ENCODE measurements at regions of chr19 and their contacts with region 1.

Region 1: DNA sequence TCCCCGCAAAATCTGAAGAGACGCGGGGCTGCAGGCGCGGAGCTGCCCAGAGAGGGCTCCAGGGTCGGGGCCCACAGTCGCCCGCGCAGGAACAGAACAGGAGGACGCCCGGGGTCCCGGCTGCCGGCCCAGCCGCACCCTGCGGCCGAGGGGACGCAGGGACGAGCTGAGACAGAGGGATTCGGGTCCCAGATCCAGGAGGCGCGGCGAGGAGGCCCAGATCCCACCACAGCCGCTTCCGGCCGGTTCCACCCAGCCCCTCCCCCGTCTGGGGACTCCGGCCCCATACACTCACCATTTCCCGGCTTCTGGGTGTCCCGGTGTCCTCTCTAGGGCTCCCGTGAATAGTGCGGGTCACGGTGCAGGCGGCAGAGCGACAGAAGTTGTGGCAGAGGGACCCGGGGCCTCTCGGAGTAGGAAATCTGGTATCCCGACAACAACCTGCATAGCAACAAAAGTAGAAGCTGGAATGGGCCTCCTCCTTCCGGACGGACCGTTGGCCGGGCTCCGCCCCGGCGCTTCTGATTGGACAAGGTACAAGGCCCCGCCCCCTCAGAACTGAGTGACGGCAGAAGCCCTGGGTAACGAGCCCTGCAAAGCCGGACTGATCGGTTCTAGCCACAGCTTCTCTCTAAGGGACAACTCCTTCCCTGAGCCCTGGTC is at the start of gene ZNF20:
- DNase-seq: peak; percentile 98
- H3K27ac ChIP-seq: peak within 1 kb of the TSS; percentile 86
- CTCF ChIP-seq: no peak

Region 2: DNA sequence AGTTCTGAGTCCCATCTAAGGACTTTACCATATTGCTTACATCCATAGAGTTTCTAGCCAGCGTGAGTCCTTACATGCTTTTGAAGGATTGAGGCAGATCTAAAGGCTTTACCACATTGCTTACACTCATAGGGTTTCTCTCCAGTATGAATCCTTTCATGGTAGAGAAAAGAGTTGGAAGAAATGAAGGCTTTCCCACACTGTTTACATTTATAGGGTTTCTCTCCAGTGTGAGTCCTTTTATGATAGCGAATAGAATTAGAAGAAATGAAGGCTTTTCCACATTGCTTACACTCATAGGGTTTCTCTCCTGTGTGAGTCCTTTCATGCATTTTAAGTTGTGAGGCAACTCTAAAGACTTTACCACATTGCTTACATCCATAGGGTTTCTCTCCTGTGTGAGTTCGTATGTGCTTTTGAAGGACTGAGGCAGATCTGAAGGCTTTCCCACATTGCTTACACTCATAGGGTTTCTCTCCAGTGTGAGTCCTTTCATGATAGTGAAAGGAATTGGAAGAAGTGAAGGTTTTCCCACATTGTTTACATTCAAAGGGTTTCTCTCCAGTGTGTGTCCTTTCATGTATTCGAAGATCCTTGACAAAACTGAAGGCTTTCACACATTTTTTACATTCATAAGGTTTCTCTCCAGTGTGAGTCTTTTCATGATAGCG is 96.1 kb before region 1 on chr19:
- CTCF ChIA-PET with region 1: no interaction called
- POLR2A ChIA-PET with region 1: no interaction called
- DNase-seq: no peak
- H3K27ac ChIP-seq: no peak overlapping the region
- CTCF ChIP-seq: no peak

Region 3: DNA sequence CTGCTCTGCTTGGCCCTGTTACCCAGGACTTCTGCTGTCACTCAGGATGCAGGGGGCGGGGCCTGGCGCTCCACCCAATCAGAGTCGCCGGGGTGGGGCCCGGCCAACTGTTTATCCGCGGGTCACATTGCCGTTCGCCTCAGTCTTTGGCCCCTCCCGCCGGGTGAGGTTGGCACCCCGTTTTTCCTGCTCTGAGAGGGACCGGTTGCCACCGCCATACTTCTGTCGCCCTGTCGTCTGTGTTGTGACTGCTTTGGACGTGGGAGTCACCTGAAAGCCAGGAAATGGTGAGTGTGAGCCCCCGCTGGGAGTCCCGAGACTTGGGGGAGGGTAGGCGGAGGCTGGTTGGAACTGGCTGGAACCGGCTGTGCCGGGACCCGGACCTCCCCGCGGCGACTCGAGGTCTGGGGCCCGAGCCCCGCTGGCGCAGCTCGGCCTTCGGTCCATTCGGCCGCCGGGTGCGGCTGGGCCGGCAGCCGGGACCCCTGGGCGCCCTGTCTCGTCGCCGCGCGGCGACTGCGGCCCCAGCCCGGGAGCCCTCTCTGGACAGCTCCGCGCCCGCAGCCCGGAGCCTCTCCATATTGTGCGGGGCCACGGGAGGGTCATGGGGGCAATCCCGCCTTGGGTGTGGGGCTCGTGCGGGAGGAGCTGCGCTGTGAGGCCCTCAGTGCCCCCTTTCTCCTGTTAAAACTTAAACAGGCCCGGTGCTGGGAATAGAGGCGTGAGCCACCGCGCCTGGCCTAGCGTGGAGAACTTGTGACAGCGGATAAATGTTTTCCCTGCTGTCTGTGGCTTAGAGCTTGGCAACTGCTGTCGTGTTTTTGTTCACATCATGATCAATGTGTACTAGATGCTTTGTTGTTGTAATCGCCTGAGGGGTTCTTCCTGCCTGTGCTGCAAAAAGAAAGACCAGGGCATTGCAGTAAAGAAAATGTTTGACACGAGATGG is 75.2 kb before region 1 on chr19 and contains the start of gene ZNF844:
- CTCF ChIA-PET with region 1: interaction called, 22 read pairs
- POLR2A ChIA-PET with region 1: no interaction called
- DNase-seq: peak; percentile 94
- H3K27ac ChIP-seq: peak within 1 kb of the TSS; percentile 80
- CTCF ChIP-seq: no peak

Region 4: DNA sequence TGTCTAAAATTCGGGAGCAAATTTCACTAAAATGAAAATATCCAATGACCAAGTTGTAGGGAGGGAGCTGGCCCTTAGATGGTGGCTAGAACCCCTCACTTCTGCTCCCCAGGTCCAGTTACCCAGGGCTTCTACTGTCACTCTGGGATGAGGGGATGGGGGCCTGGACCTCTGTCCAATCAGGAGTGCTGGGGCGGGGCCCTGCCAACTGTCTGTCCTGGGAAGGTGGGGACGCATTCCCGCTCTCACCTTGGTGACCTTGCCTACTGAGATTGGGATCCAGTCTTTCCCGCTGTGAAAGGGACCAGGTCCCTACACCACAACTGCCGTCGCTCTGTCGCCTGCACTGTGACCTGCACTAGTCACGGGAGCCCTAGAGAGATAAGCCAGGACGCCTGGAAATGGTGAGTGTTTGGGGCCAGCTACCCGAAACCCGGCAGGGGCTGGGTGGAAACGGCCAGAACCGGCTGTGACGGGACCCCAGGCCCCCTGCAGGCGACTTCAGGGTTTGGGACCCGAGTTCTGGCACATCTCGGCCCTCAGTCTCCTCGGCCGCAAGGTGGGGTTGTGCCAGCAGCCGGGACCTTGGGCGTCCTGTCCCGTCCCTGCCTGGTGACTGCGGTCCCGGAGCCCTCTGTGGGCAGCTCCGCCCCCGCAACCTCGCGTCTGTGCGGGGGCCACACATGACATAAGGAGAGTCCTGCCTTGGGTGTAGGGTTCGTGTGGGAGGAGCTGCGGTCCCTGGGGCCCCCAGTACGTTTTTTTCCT is 22.6 kb before region 1 on chr19:
- CTCF ChIA-PET with region 1: no interaction called
- POLR2A ChIA-PET with region 1: no interaction called
- DNase-seq: no peak
- H3K27ac ChIP-seq: no peak overlapping the region
- CTCF ChIP-seq: no peak

Region 5: GRCh38 chr19:12194827-12195731 is 55.1 kb after region 1 on chr19:
- CTCF ChIA-PET with region 1: no interaction called
- POLR2A ChIA-PET with region 1: no interaction called
- DNase-seq: peak; percentile 64
- H3K27ac ChIP-seq: peak overlapping the region; percentile 74
- CTCF ChIP-seq: no peak